Transverse colon (tissue), 4 donors: ENCODE measurements at regions of chr11 and their contacts with region 1.

Region 1: GRCh38 chr11:35815556-35816315 is 128.1 kb upstream of the LDLRAD3 start:
- DNase-seq: no peak
- H3K4me3 ChIP-seq: no peak overlapping the region
- H3K27ac ChIP-seq: no peak overlapping the region
- H3K4me1 ChIP-seq: no peaks in the 10 kb centered on the region
- H3K27me3 ChIP-seq: no peaks in the 10 kb centered on the region
- CTCF ChIP-seq: no peak
- EP300 ChIP-seq: no peak
- POLR2A ChIP-seq: no peak

Region 2: GRCh38 chr11:35237860-35238715 is 577.6 kb before region 1 on chr11:
- in situ Hi-C with region 1: no loop called
- intact Hi-C with region 1: no loop called
- DNase-seq: peak; percentile 54
- H3K4me3 ChIP-seq: no peak overlapping the region
- H3K27ac ChIP-seq: no peak overlapping the region
- H3K4me1 ChIP-seq: peaks cover 0 to 34% (median 2%) of the 10 kb centered on the region in 4 donors
- H3K27me3 ChIP-seq: no peaks in the 10 kb centered on the region
- CTCF ChIP-seq: peak; percentile 65 to 78 (median 75)
- EP300 ChIP-seq: no peak
- POLR2A ChIP-seq: no peak

Region 3: GRCh38 chr11:35593143-35593542 is 222.6 kb before region 1 on chr11:
- in situ Hi-C with region 1: no loop called
- intact Hi-C with region 1: no loop called
- DNase-seq: no peak
- H3K4me3 ChIP-seq: no peak overlapping the region
- H3K27ac ChIP-seq: no peak overlapping the region
- H3K4me1 ChIP-seq: no peaks in the 10 kb centered on the region
- H3K27me3 ChIP-seq: no peaks in the 10 kb centered on the region
- CTCF ChIP-seq: no peak
- EP300 ChIP-seq: no peak
- POLR2A ChIP-seq: no peak

Region 4: DNA sequence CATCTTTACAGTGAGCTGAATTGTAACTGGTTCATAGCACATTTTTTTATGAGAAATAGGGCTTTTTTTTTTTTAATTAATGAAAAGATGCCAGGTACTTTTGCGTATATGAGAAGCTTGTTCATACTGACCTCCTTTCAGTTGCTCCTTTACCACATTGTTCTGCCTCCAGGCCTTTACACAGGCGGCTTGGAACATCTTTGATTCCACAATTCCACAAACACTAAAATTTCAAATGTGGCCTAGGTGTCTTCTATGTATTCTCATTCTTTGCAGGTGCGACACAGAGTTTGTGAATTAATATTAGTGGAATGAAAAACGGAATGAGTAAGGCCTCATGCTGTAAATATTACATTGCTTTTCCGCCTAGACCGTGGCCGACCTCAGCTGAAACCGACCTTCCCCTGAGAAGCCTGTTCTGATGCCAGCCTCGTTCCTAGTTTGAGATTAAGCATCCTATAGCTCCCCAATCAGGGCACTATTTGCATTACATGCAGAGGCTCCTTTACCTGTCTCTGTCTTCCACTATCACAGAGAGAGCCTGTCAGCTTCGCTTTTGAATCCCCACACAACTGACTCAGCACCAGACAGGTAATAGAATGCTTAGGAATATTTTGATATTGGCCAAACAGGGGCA is 254.0 kb after region 1 on chr11:
- in situ Hi-C with region 1: no loop called
- intact Hi-C with region 1: loop called (anchors 2 kb)
- DNase-seq: no peak
- H3K4me3 ChIP-seq: no peak overlapping the region
- H3K27ac ChIP-seq: no peak overlapping the region
- H3K4me1 ChIP-seq: peaks cover 4 to 12% (median 6%) of the 10 kb centered on the region in 4 donors
- H3K27me3 ChIP-seq: no peaks in the 10 kb centered on the region
- CTCF ChIP-seq: no peak
- EP300 ChIP-seq: no peak
- POLR2A ChIP-seq: no peak